ENCODE measurements at regions of chrX and their contacts with region 1.

Region 1: DNA sequence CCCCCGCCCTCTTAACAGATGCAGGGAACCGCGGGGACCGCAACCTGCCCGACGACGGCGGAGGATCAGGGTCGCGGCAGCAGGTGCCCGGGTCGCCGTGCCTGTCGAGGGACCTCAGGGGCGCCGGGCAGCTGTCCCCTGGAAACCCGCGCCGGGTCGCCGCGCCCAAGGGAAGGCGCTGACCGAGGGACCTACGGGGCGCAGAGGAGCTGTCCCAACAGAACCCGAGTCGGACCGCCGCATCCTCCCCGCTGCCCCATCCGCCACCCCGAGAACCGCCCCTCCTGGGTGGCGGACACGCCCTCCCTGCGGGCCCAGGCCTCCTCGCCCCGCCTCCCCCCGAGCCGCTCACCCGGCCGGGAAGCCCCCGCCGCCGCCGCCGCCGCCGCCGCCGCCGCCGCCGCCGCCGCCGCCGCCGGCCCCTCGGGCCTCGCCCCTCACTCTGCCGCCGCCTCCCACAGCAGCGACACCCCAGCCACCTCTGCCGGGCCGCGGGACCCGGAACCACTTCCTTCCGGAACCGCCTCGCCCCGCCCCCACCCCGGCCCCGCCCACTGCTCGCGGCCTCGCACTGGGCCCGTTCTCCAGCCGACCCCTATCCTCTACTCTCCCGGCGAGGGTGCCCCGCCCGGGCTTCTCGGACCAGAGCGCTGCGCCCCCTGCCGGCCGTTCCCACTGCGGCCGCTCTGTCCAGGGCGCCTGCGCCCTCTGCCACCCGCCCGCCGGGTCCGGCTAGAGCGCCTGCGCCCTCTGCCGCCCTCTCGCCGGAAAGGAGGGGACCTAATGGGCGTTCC is at the start of gene BCLAF3:
- DNase-seq: peak; percentile 81
- H3K4me3 ChIP-seq: peak within 1 kb of the TSS; percentile 55 to 58
- H3K27ac ChIP-seq: peak within 1 kb of the TSS; percentile 78 to 79
- H3K4me1 ChIP-seq: no peaks in the 10 kb centered on the region
- H3K27me3 ChIP-seq: no peaks in the 10 kb centered on the region
- CTCF ChIP-seq: peak; percentile 65 to 88 (median 83)
- POLR2A ChIP-seq: no peak
- total RNA-seq, gene BCLAF3: 7.3 to 10.1 TPM

Region 2: DNA sequence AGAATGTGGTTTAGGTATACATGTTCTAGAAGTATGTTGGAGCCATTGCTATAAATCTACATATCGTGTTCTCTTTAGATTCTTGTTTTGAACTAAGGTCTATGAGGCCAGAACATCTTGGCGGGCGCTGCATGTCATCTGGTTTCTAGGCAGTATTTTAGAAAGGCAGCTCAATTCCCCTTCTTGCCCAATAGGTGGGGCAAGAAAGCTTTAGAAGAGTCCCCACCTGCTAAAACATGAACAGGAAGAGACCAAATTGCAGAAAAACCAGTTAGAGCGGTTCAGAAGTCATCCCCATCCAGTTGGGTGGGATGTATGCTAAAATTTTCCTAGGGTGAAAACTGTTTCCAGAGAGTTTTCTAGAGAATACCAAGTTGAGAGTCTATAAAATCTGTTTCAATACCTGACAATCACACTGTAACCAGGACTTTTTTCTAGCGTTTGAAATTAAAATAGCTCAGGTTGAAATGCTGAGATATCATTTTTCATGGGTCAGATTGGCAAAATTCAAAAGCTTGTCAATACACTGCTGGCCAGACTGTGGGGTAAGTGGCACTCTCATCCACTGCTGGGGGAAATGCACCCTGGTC is 85.9 kb before region 1 on chrX:
- intact Hi-C with region 1: loop called (anchors 10 kb)
- DNase-seq: peak; percentile 23
- H3K4me3 ChIP-seq: no peak overlapping the region
- H3K27ac ChIP-seq: no peak overlapping the region
- H3K4me1 ChIP-seq: no peaks in the 10 kb centered on the region
- H3K27me3 ChIP-seq: no peaks in the 10 kb centered on the region
- CTCF ChIP-seq: peak in 2 of 4 experiments; percentile 64 to 76
- POLR2A ChIP-seq: no peak

Region 3: GRCh38 chrX:19947612-19948011 is 43.1 kb before region 1 on chrX:
- intact Hi-C with region 1: no loop called
- DNase-seq: no peak
- H3K4me3 ChIP-seq: no peak overlapping the region
- H3K27ac ChIP-seq: no peak overlapping the region
- H3K4me1 ChIP-seq: no peaks in the 10 kb centered on the region
- H3K27me3 ChIP-seq: no peaks in the 10 kb centered on the region
- CTCF ChIP-seq: no peak
- POLR2A ChIP-seq: no peak

Measured in prostate gland (tissue), 2 donors.